AG04450 (cell line): ENCODE measurements at regions of chr6 and their contacts with region 1.

Region 1: DNA sequence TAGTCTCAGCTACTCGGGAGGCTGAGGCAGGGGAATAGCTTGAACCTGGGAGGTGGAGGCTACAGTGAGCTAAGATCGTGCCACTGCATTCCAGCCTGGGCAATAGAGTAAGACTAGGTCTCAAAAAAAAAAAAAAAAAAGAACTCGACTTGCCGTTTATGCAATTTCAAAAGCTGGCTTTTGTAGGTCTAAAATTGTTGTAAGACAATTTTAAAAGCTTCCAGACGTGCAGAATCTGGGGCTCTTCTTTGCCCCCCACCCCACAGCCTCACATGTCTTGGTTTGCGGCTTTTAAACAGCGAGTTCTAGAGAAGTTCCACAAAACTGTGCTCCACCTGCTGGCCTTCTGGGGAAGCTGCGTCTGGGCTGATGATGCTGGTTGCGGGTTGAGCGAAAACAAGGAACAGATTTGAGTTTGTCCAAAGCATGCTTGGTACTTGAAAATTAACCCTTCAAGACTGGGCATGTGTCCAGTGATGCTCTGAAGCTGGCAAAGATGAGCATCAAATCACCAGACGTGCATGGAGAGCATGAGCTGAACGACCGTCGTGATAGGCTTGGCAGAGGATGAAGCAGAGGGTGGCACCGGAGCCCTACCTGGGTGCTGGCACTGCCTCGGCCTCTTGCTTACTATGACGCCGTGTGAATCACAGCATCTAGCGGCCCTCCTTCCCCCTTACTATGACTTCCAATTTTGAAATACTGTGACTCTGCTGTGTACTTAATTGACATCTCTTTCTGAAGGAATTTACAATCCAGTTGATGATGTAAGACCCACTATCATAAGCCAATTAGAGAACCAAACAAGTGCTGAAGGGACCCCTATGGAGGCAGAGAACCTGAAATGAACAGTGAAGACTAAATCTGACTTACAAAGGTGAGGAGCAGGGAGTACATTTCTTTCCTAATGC is 171.4 kb downstream of the GMPR start:
- DNase-seq: no peak
- H3K4me3 ChIP-seq: no peak overlapping the region
- H3K27ac ChIP-seq: no peak overlapping the region
- H3K27me3 ChIP-seq: no peaks in the 10 kb centered on the region
- CTCF ChIP-seq: peak; percentile 84

Region 2: GRCh38 chr6:16232086-16232485 is 177.7 kb before region 1 on chr6:
- CTCF ChIA-PET with region 1: no interaction called
- POLR2A ChIA-PET with region 1: no interaction called
- DNase-seq: no peak
- H3K4me3 ChIP-seq: no peak overlapping the region
- H3K27ac ChIP-seq: no peak overlapping the region
- H3K27me3 ChIP-seq: peaks cover 3% of the 10 kb centered on the region
- CTCF ChIP-seq: no peak

Region 3: GRCh38 chr6:16420715-16421461 is 11.1 kb after region 1 on chr6:
- CTCF ChIA-PET with region 1: interaction called, 14 read pairs
- POLR2A ChIA-PET with region 1: no interaction called
- DNase-seq: peak; percentile 33
- H3K4me3 ChIP-seq: no peak overlapping the region
- H3K27ac ChIP-seq: no peak overlapping the region
- H3K27me3 ChIP-seq: no peaks in the 10 kb centered on the region
- CTCF ChIP-seq: no peak

Region 4: GRCh38 chr6:16425881-16426615 is 16.3 kb after region 1 on chr6:
- CTCF ChIA-PET with region 1: interaction called, 14 read pairs
- POLR2A ChIA-PET with region 1: no interaction called
- DNase-seq: no peak
- H3K4me3 ChIP-seq: no peak overlapping the region
- H3K27ac ChIP-seq: no peak overlapping the region
- H3K27me3 ChIP-seq: no peaks in the 10 kb centered on the region
- CTCF ChIP-seq: no peak

Region 5: DNA sequence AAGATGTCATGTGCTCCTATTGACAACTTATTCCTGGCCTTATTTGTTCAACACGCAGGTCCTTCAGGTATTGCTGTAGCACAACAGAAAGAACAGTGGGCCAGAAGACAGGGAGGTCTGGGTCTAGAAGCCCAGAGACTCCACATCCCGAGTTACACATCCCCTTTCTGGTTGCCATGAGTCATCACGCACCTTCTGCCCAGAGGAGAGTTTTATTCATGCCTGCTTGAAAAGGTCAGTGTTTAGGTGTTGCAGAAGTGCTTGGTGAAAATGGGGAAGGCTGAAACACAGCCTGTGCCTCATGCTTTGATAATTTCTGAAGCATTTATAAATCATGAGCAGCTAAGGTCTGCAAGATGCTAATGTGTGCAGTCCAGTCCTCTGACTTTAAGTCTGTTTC is 85.0 kb after region 1 on chr6:
- CTCF ChIA-PET with region 1: no interaction called
- POLR2A ChIA-PET with region 1: no interaction called
- DNase-seq: no peak
- H3K4me3 ChIP-seq: no peak overlapping the region
- H3K27ac ChIP-seq: no peak overlapping the region
- H3K27me3 ChIP-seq: no peaks in the 10 kb centered on the region
- CTCF ChIP-seq: no peak